CD8-positive, alpha-beta T cell (primary cell): ENCODE measurements at regions of chr10 and their contacts with region 1.

Region 1: DNA sequence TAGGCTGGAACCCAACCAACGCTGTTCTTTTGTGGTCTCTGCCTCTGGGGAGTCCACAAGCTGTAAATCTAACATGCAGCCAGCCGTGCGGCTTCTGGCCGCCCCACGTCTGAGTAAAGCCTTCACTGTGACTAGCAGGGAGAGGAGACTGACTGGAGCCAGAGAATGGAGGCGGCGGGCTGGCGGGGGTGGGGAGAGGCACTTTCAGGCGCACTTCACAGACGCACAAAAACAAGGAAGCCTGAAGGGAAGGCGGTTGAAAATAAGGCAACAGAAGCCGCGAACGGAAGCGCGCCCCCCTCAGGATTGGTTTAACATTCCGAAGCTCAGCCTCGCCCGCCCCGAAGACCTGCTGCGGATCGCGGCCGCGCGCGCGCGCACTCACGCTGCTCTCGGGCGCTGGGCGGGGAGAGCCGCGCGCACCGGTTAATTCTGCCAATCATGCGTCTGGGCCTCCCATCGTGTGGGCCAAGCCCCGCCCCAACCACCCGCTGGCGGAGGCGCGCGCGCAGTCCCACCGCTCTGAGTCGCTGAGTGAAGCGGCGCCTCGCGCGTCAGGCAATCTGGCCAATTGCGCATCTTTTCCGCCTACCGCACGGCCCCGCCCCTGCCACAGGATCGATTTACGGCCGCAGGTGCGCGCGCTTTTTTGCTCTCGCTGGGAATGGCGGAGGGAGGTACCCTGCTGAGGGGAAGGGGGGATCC is at the start of gene SFR1:
- DNase-seq: peak; percentile 98 to 100 (median 99)
- ATAC-seq: peak; percentile 90
- H3K4me3 ChIP-seq: peak within 1 kb of the TSS; percentile 95 to 98
- H3K4me3 Mint-ChIP-seq: peak within 1 kb of the TSS; percentile 95
- H3K27ac ChIP-seq: peak within 1 kb of the TSS; percentile 98 to 99
- H3K27ac Mint-ChIP-seq: peak within 1 kb of the TSS; percentile 99
- H3K4me1 ChIP-seq: peaks cover 19% of the 10 kb centered on the region
- H3K4me1 Mint-ChIP-seq: peaks cover 29% of the 10 kb centered on the region
- H3K27me3 ChIP-seq: no peaks in the 10 kb centered on the region
- H3K27me3 Mint-ChIP-seq: peaks cover 6% of the 10 kb centered on the region
- CTCF ChIP-seq: peak; percentile 50
- total RNA-seq, gene SFR1: 6.2 to 6.8 TPM

Region 2: GRCh38 chr10:103911021-103911459 is 210.6 kb before region 1 on chr10:
- CTCF ChIA-PET with region 1: interaction called, 5 read pairs
- POLR2A ChIA-PET with region 1: interaction called, 13 read pairs
- intact Hi-C with region 1: loop called in 1 of 2 experiments (anchors 2 kb)
- DNase-seq: peak; percentile 7 to 83 (median 53)
- ATAC-seq: peak; percentile 72
- H3K4me3 ChIP-seq: peak overlapping the region; percentile 24 to 39
- H3K4me3 Mint-ChIP-seq: peak overlapping the region; percentile 80
- H3K27ac ChIP-seq: peak overlapping the region; percentile 77 to 88
- H3K27ac Mint-ChIP-seq: peak overlapping the region; percentile 91
- H3K4me1 ChIP-seq: peaks cover 88% of the 10 kb centered on the region
- H3K4me1 Mint-ChIP-seq: peaks cover 82% of the 10 kb centered on the region
- H3K27me3 ChIP-seq: no peaks in the 10 kb centered on the region
- H3K27me3 Mint-ChIP-seq: no peaks in the 10 kb centered on the region
- CTCF ChIP-seq: no peak

Region 3: DNA sequence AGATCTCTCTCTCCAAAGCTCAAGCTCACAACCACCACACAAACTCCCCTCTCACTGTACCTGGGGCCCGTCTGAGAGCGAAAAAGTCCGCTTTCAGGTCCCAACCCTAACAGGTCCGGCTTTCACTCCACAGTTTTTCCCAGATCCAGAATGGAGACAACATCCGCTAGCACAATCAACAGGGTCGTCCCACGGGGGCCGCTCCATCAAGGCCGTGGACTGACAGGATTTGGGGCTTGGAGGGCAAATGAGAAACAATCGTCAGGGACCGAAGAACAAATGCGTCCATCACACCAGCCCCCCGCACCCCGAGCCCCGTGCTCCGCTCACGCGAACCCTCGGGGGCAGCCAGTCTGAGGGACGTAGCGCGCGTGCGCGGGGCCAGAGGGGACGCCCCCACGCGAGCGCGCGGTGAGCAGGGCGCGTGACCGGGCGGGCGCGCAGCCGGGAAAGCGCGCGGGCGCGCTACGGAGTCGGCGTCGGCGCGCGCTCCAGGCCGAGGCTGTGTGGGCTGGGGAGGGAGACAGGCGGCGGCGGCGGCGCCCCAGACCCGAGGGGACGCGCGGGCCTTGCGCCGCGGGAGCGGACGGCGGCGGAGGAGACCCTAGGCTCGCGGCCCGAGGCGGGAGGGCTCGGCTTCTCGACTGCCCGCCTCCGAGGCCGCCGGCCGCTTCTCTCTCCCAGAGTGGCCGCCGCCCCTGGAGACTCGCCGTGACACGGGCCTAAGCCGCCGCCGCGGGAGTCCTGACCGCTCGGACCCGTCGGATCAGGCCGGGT is 154.8 kb before region 1 on chr10 and contains the start of gene SLK:
- CTCF ChIA-PET with region 1: interaction called, 4 read pairs
- POLR2A ChIA-PET with region 1: interaction called, 13 read pairs
- intact Hi-C with region 1: loop called (anchors 1 kb)
- DNase-seq: peak; percentile 72 to 95 (median 84)
- ATAC-seq: peak; percentile 83
- H3K4me3 ChIP-seq: peak within 1 kb of the TSS; percentile 96 to 97
- H3K4me3 Mint-ChIP-seq: peak within 1 kb of the TSS; percentile 96
- H3K27ac ChIP-seq: peak within 1 kb of the TSS; percentile 83 to 86
- H3K27ac Mint-ChIP-seq: peak within 1 kb of the TSS; percentile 89
- H3K4me1 ChIP-seq: peaks cover 14% of the 10 kb centered on the region
- H3K4me1 Mint-ChIP-seq: peaks cover 44% of the 10 kb centered on the region
- H3K27me3 ChIP-seq: no peaks in the 10 kb centered on the region
- H3K27me3 Mint-ChIP-seq: no peaks in the 10 kb centered on the region
- CTCF ChIP-seq: no peak
- total RNA-seq, gene SLK: 23.8 to 24.6 TPM

Region 4: GRCh38 chr10:104045151-104046089 is 76.3 kb before region 1 on chr10:
- CTCF ChIA-PET with region 1: no interaction called
- POLR2A ChIA-PET with region 1: no interaction called
- intact Hi-C with region 1: no loop called
- DNase-seq: peak in 2 of 9 experiments; percentile 18 to 34
- ATAC-seq: no peak
- H3K4me3 ChIP-seq: no peak overlapping the region
- H3K4me3 Mint-ChIP-seq: no peak overlapping the region
- H3K27ac ChIP-seq: no peak overlapping the region
- H3K27ac Mint-ChIP-seq: no peak overlapping the region
- H3K4me1 ChIP-seq: no peaks in the 10 kb centered on the region
- H3K4me1 Mint-ChIP-seq: no peaks in the 10 kb centered on the region
- H3K27me3 ChIP-seq: no peaks in the 10 kb centered on the region
- H3K27me3 Mint-ChIP-seq: no peaks in the 10 kb centered on the region
- CTCF ChIP-seq: no peak

Region 5: GRCh38 chr10:104209575-104210198 is 88.0 kb after region 1 on chr10:
- CTCF ChIA-PET with region 1: interaction called, 3 read pairs
- POLR2A ChIA-PET with region 1: no interaction called
- intact Hi-C with region 1: loop called in 1 of 2 experiments (anchors 2 kb)
- DNase-seq: peak in 7 of 9 experiments; percentile 10 to 65 (median 45)
- ATAC-seq: peak; percentile 71
- H3K4me3 ChIP-seq: no peak overlapping the region
- H3K4me3 Mint-ChIP-seq: no peak overlapping the region
- H3K27ac ChIP-seq: no peak overlapping the region
- H3K27ac Mint-ChIP-seq: no peak overlapping the region
- H3K4me1 ChIP-seq: no peaks in the 10 kb centered on the region
- H3K4me1 Mint-ChIP-seq: no peaks in the 10 kb centered on the region
- H3K27me3 ChIP-seq: no peaks in the 10 kb centered on the region
- H3K27me3 Mint-ChIP-seq: peaks cover 14% of the 10 kb centered on the region
- CTCF ChIP-seq: peak; percentile 54

Region 6: DNA sequence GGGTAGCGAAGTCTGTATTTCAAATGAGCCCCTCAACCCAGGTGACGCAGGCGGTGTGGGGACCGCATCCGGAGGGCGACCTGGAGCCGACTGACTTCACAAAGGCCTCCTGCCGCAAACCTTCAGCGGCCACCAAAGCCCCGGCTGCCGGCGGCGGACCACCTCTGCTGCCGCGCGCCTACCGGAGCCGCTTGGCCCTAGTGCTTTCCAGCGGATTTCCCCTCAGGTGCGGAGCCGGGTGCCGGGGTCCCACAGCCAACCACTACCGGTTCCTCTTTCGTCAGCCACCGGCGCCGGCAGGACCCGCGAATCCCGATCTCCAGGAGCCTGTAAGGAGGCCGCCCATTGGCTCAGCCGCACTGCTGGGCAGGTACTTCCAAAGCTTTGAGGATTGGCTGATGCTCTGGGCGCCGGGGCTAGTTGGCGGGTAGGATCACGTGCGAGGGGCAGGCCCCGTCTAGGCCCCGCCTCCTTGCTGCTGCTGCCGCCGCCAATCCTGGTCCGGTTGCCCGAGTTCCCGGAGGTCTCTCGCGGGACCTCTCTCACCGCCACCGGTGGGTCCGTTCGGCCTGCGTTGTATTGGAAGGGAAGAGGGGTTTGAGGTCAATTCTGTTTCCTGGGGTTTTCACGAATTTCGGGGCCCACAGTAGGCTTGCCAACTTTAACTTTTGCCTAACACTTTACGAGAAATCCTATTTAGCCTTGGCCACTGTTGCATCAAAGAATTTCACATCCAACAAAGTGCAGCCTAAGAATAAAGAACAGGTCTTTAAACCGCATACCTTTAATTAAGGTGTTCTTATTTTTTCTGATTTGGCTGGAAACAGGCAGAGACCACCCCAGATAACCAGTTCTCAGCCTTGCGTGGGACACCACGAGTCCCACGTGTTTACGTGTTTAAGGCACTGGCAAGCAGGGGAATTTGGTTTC is 147.3 kb after region 1 on chr10 and contains the start of gene GSTO2:
- CTCF ChIA-PET with region 1: no interaction called
- POLR2A ChIA-PET with region 1: interaction called, 3 read pairs
- intact Hi-C with region 1: loop called (anchors 1 kb)
- DNase-seq: peak; percentile 94 to 99 (median 97)
- ATAC-seq: peak; percentile 89
- H3K4me3 ChIP-seq: peak within 1 kb of the TSS; percentile 81 to 82
- H3K4me3 Mint-ChIP-seq: peak within 1 kb of the TSS; percentile 94
- H3K27ac ChIP-seq: peak within 1 kb of the TSS; percentile 90 to 93
- H3K27ac Mint-ChIP-seq: peak within 1 kb of the TSS; percentile 96
- H3K4me1 ChIP-seq: peaks cover 26% of the 10 kb centered on the region
- H3K4me1 Mint-ChIP-seq: peaks cover 48% of the 10 kb centered on the region
- H3K27me3 ChIP-seq: no peaks in the 10 kb centered on the region
- H3K27me3 Mint-ChIP-seq: peaks cover 1% of the 10 kb centered on the region
- CTCF ChIP-seq: no peak
- total RNA-seq, gene GSTO2: 0.49 to 0.75 TPM

Region 7: GRCh38 chr10:104353325-104354048 is 231.8 kb after region 1 on chr10 and contains the start of gene CFAP58:
- CTCF ChIA-PET with region 1: interaction called, 4 read pairs
- POLR2A ChIA-PET with region 1: interaction called, 3 read pairs
- intact Hi-C with region 1: loop called (anchors 5 kb)
- DNase-seq: peak; percentile 76 to 95 (median 89)
- ATAC-seq: peak; percentile 84
- H3K4me3 ChIP-seq: peak within 1 kb of the TSS; percentile 46 to 53
- H3K4me3 Mint-ChIP-seq: peak within 1 kb of the TSS; percentile 44
- H3K27ac ChIP-seq: peak within 1 kb of the TSS in 1 of 2 experiments; percentile 58
- H3K27ac Mint-ChIP-seq: peak within 1 kb of the TSS; percentile 73
- H3K4me1 ChIP-seq: peaks cover 19% of the 10 kb centered on the region
- H3K4me1 Mint-ChIP-seq: peaks cover 2% of the 10 kb centered on the region
- H3K27me3 ChIP-seq: no peaks in the 10 kb centered on the region
- H3K27me3 Mint-ChIP-seq: no peaks in the 10 kb centered on the region
- CTCF ChIP-seq: peak; percentile 74
- total RNA-seq, gene CFAP58: not detected